ENCODE measurements at regions of chr7 and their contacts with region 1.

Region 1: GRCh38 chr7:44082541-44083207 is 344 bp upstream of the POLM start:
- DNase-seq: peak; percentile 97
- H3K4me3 Mint-ChIP-seq: peak overlapping the region; percentile 90
- H3K27ac Mint-ChIP-seq: peak overlapping the region; percentile 84
- H3K4me1 Mint-ChIP-seq: peaks cover 28% of the 10 kb centered on the region
- H3K27me3 Mint-ChIP-seq: no peaks in the 10 kb centered on the region

Region 2: GRCh38 chr7:44044315-44045225 is 38.1 kb before region 1 on chr7 and contains the start of gene DBNL:
- intact Hi-C with region 1: loop called (anchors 2 kb)
- DNase-seq: peak; percentile 92
- H3K4me3 Mint-ChIP-seq: peak within 1 kb of the TSS; percentile 92
- H3K27ac Mint-ChIP-seq: peak within 1 kb of the TSS; percentile 87
- H3K4me1 Mint-ChIP-seq: peaks cover 44% of the 10 kb centered on the region
- H3K27me3 Mint-ChIP-seq: no peaks in the 10 kb centered on the region
- total RNA-seq, gene DBNL: 140 TPM in 2 replicates

Region 3: GRCh38 chr7:44103923-44104859 is 21.5 kb after region 1 on chr7 and contains the start of gene AEBP1:
- intact Hi-C with region 1: loop called (anchors 2 kb)
- DNase-seq: no peak
- H3K4me3 Mint-ChIP-seq: peak within 1 kb of the TSS; percentile 75
- H3K27ac Mint-ChIP-seq: no peak within 1 kb of the TSS
- H3K4me1 Mint-ChIP-seq: peaks cover 10% of the 10 kb centered on the region
- H3K27me3 Mint-ChIP-seq: peaks cover 20% of the 10 kb centered on the region
- total RNA-seq, gene AEBP1: 17.0 and 17.2 TPM in 2 replicates

Region 4: GRCh38 chr7:44145969-44146911 is 63.6 kb after region 1 on chr7:
- intact Hi-C with region 1: loop called (anchors 1 kb)
- DNase-seq: peak; percentile 70
- H3K4me3 Mint-ChIP-seq: peak overlapping the region; percentile 80
- H3K27ac Mint-ChIP-seq: no peak overlapping the region
- H3K4me1 Mint-ChIP-seq: peaks cover 6% of the 10 kb centered on the region
- H3K27me3 Mint-ChIP-seq: peaks cover 6% of the 10 kb centered on the region

Region 5: GRCh38 chr7:44257618-44258422 is 175.1 kb after region 1 on chr7:
- intact Hi-C with region 1: loop called (anchors 1 kb)
- DNase-seq: peak; percentile 69
- H3K4me3 Mint-ChIP-seq: peak overlapping the region; percentile 56
- H3K27ac Mint-ChIP-seq: peak overlapping the region; percentile 78
- H3K4me1 Mint-ChIP-seq: peaks cover 34% of the 10 kb centered on the region
- H3K27me3 Mint-ChIP-seq: no peaks in the 10 kb centered on the region

Region 6: GRCh38 chr7:44573464-44574286 is 491.0 kb after region 1 on chr7 and contains the start of gene DDX56:
- intact Hi-C with region 1: loop called (anchors 1 kb)
- DNase-seq: peak; percentile 93
- H3K4me3 Mint-ChIP-seq: peak within 1 kb of the TSS; percentile 88
- H3K27ac Mint-ChIP-seq: peak within 1 kb of the TSS; percentile 95
- H3K4me1 Mint-ChIP-seq: peaks cover 32% of the 10 kb centered on the region
- H3K27me3 Mint-ChIP-seq: no peaks in the 10 kb centered on the region
- total RNA-seq, gene DDX56: 165 and 166 TPM in 2 replicates